ENCODE measurements at regions of chr2 and their contacts with region 1.

Region 1: GRCh38 chr2:30404319-30404953 is 42.6 kb upstream of the LCLAT1 start:
- DNase-seq: no peak
- H3K4me3 ChIP-seq: no peak overlapping the region
- H3K27ac ChIP-seq: no peak overlapping the region
- H3K4me1 ChIP-seq: peaks cover 14 to 37% of the 10 kb centered on the region in 2 donors
- H3K27me3 ChIP-seq: no peaks in the 10 kb centered on the region
- CTCF ChIP-seq: no peak

Region 2: GRCh38 chr2:30373881-30374302 is 30.5 kb before region 1 on chr2:
- intact Hi-C with region 1: loop called (anchors 1 kb)
- DNase-seq: no peak
- H3K4me3 ChIP-seq: no peak overlapping the region
- H3K27ac ChIP-seq: peak overlapping the region; percentile 79 to 84
- H3K4me1 ChIP-seq: peaks cover 0 to 25% of the 10 kb centered on the region in 2 donors
- H3K27me3 ChIP-seq: no peaks in the 10 kb centered on the region
- CTCF ChIP-seq: no peak

Region 3: DNA sequence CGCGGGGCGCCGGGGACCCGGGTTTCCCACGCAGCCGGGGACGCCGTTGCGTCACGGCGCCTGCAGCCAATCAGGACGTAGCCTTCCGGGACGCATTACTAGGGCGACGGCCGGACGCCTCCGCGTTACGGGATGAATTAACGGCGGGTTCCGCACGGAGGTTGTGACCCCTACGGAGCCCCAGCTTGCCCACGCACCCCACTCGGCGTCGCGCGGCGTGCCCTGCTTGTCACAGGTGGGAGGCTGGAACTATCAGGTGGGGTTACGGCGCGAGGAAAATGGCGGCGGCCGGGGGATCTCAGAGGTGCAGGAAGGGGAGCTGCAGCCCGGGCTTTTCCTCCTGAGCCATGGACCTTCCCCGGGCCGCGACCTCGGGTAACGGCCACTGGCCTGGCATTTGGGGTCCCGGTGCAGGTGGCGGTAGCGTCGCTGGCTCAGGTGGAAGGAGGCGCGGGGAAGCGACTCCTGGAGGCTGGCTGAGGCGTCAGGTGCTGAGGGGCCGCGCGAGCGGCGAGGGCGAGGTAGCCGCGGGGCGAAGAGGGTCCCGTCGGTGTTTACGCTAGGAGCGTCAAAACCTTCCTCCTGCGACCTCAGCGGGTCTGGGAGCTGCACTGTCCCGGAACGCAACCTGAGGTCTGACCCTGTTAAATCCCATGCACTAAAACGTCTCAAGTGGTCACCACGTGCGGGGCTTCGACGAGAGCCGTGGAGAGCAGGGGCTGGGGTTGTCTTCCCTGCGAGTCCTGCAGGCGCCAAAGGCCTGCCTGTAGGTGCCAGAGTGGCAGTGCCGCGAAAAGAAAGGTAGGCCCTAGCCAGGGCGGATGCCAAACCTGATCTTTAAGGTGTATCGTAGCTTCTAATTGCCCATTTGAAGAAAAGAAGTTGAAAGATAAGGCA is 43.0 kb after region 1 on chr2 and contains the start of gene LCLAT1:
- intact Hi-C with region 1: loop called (anchors 1 kb)
- DNase-seq: peak; percentile 22 to 88
- H3K4me3 ChIP-seq: peak within 1 kb of the TSS; percentile 82 to 87
- H3K27ac ChIP-seq: peak within 1 kb of the TSS; percentile 66 to 70
- H3K4me1 ChIP-seq: peaks cover 4 to 5% of the 10 kb centered on the region in 2 donors
- H3K27me3 ChIP-seq: no peaks in the 10 kb centered on the region
- CTCF ChIP-seq: peak in 1 of 3 experiments; percentile 13
- total RNA-seq, gene LCLAT1: 9.8 TPM

Measured in ascending aorta (tissue), 2 donors.